ENCODE measurements at regions of chr3 and their contacts with region 1.

Region 1: GRCh38 chr3:23945903-23946751 is 1.0 kb downstream of the NR1D2 start:
- DNase-seq: peak; percentile 99
- H3K4me3 ChIP-seq: peak overlapping the region; percentile 68 to 93 (median 82)
- H3K27ac ChIP-seq: peak overlapping the region; percentile 84 to 99 (median 96)
- H3K4me1 ChIP-seq: peaks cover 18 to 62% (median 53%) of the 10 kb centered on the region in 6 donors
- H3K27me3 ChIP-seq: no peaks in the 10 kb centered on the region
- CTCF ChIP-seq: peak in 4 of 11 experiments; percentile 10 to 41 (median 24)
- POLR2A ChIP-seq: no peak

Region 2: GRCh38 chr3:23919628-23920027 is 26.5 kb before region 1 on chr3:
- intact Hi-C with region 1: loop called (anchors 2 kb)
- DNase-seq: no peak
- H3K4me3 ChIP-seq: no peak overlapping the region
- H3K27ac ChIP-seq: no peak overlapping the region
- H3K4me1 ChIP-seq: peaks cover 28 to 54% (median 49%) of the 10 kb centered on the region in 6 donors
- H3K27me3 ChIP-seq: no peaks in the 10 kb centered on the region
- CTCF ChIP-seq: no peak
- POLR2A ChIP-seq: no peak

Measured in spleen (tissue), 13 donors.